Heart left ventricle (tissue), 16 donors: ENCODE measurements at regions of chr10 and their contacts with region 1.

Region 1: DNA sequence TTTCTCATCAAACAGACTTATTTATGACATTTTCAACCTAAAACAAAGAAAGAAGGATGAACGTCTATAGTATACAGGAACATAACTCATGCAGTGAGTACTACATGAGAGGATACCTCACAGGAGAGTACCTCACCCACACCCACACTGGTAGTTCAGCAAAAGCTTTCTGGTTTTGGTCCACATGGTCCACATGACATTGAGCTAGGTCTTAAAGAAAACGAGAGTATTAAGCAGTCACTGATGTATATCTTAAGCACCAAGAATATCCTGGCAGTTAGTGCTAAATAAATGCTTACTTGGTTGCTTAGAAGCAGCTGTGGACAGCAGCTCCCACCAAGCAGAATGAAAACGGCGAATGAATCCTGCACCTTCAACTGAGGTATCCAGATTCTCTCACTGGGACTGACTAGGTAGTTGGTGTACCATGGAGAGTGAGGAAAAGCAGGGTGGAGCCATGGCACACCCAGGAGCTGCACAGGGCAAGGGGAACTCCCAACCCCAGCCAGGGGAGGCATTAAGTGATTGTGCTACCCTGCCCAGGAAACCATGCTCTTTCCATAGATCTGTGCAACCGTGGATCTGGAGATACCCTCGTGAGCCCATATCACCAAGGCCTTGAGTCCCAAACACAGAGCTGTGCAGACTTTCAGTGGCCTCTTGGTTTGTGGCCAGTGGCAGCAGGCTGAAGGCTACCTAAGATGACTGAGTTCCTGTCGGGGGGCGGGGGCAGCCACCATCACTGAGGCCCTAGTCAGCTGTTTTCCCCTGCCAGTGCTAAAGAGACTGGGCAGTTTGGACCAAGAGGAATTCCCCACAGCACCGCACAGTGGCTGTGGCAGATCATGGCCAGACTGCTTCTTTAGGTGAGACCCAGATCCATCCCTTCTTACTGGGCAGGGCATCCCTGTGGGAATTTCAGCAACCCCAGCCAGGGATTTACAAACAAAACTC is 143.4 kb downstream of the SGMS1 start:
- DNase-seq: no peak
- ATAC-seq: no peak
- H3K4me3 ChIP-seq: no peak overlapping the region
- H3K27ac ChIP-seq: no peak overlapping the region
- H3K4me1 ChIP-seq: no peaks in the 10 kb centered on the region
- H3K27me3 ChIP-seq: no peaks in the 10 kb centered on the region
- CTCF ChIP-seq: no peak
- POLR2A ChIP-seq: no peak

Region 2: DNA sequence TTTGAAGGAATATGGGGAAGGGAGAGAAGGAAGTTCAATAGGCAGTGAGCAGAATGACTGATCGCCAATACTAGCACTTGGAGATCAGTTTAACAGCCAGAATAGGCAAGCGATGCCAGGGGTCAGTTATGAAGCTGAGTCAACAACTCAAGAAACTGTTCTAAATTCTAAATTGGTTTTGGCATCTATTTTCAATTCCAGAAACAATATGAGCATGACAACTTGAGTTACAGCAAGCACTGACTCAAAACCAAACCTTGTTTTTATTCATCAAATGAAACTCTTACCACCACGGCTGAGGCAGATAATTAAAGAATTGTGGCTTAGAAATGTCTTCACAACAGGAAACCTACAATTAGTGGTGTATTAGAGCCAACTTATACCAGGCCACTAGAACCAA is 48.5 kb before region 1 on chr10:
- intact Hi-C with region 1: loop called in 1 of 10 experiments (anchors 10 kb)
- DNase-seq: no peak
- ATAC-seq: peak in 1 of 4 donors; percentile 7
- H3K4me3 ChIP-seq: peak overlapping the region in 6 of 12 donors; percentile 8 to 31 (median 14)
- H3K27ac ChIP-seq: peak overlapping the region; percentile 18 to 86 (median 59)
- H3K4me1 ChIP-seq: peaks cover 0 to 31% (median 14%) of the 10 kb centered on the region in 12 donors
- H3K27me3 ChIP-seq: no peaks in the 10 kb centered on the region
- CTCF ChIP-seq: no peak
- POLR2A ChIP-seq: no peak